Mammary epithelial cell (primary cell): ENCODE measurements at regions of chr6 and their contacts with region 1.

Region 1: GRCh38 chr6:43444036-43444435 is 11.3 kb downstream of the DLK2 start:
- DNase-seq: no peak
- H3K4me3 ChIP-seq: no peak overlapping the region
- H3K27ac ChIP-seq: no peak overlapping the region
- H3K4me1 ChIP-seq: no peaks in the 10 kb centered on the region
- H3K27me3 ChIP-seq: no peaks in the 10 kb centered on the region
- CTCF ChIP-seq: no peak

Region 2: GRCh38 chr6:43402820-43403219 is 41.2 kb before region 1 on chr6:
- CTCF ChIA-PET with region 1: no interaction called
- dilution Hi-C with region 1: loop called (anchors 5 kb)
- in situ Hi-C with region 1: no loop called
- intact Hi-C with region 1: no loop called
- DNase-seq: no peak
- H3K4me3 ChIP-seq: no peak overlapping the region
- H3K27ac ChIP-seq: no peak overlapping the region
- H3K4me1 ChIP-seq: peaks cover 7% of the 10 kb centered on the region
- H3K27me3 ChIP-seq: no peaks in the 10 kb centered on the region
- CTCF ChIP-seq: peak; percentile 24 to 27